Activated CD8-positive, alpha-beta T cell treated with anti-CD3 and anti-CD28 coated beads for 36 hours (primary cell): ENCODE measurements at regions of chr19 and their contacts with region 1.

Region 1: GRCh38 chr19:39445265-39446111 is at the start of gene SUPT5H:
- DNase-seq: peak; percentile 99
- ATAC-seq: peak; percentile 93
- H3K4me3 Mint-ChIP-seq: peak within 1 kb of the TSS; percentile 100
- H3K27ac Mint-ChIP-seq: peak within 1 kb of the TSS; percentile 99
- H3K4me1 Mint-ChIP-seq: peaks cover 40% of the 10 kb centered on the region
- H3K27me3 Mint-ChIP-seq: no peaks in the 10 kb centered on the region
- CTCF ChIP-seq: no peak
- total RNA-seq, gene SUPT5H: 127 to 141 TPM

Region 2: DNA sequence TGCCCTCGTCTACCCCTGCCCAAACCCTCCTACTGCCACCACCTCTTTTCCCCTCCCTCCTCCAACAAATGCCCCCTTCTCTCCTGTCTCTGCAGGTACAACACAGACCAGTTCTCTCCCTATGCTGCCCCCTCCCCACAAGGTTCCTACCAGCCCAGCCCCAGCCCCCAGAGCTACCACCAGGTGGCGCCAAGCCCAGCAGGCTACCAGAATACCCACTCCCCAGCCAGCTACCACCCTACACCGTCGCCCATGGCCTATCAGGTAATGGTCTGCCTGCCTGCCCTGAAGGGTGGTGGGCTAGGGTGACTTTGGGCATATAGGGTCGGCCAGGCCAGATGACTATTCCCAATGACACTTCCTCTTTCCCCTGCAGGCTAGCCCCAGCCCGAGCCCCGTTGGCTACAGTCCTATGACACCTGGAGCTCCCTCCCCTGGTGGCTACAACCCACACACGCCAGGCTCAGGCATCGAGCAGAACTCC is 28.7 kb after region 1 on chr19:
- CTCF ChIA-PET with region 1: interaction called, 12 read pairs
- POLR2A ChIA-PET with region 1: interaction called, 5 read pairs
- intact Hi-C with region 1: no loop called
- DNase-seq: peak; percentile 80
- ATAC-seq: peak; percentile 70
- H3K4me3 Mint-ChIP-seq: no peak overlapping the region
- H3K27ac Mint-ChIP-seq: no peak overlapping the region
- H3K4me1 Mint-ChIP-seq: peaks cover 32% of the 10 kb centered on the region
- H3K27me3 Mint-ChIP-seq: no peaks in the 10 kb centered on the region
- CTCF ChIP-seq: peak; percentile 76

Region 3: DNA sequence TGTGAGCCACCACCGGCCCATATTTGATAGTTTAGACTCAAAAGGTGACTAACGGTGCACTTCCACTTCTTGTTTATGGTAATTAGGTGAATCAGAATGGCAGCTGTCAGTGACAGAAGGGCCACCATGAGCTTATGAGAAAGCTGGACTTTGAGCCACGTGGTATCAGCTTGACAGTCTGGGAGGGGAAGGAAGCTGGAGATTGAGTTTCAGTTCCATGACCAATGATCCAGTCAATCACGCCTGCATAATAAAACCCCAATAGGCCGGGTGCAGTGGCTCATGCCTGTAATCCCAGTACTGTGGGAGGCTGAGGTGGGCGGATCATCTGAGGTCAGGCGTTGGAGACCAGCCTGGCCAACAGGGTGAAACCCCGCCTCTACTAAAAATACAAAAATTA is 79.0 kb after region 1 on chr19:
- CTCF ChIA-PET with region 1: interaction called, 3 read pairs
- POLR2A ChIA-PET with region 1: no interaction called
- intact Hi-C with region 1: loop called (anchors 5 kb)
- DNase-seq: no peak
- ATAC-seq: no peak
- H3K4me3 Mint-ChIP-seq: no peak overlapping the region
- H3K27ac Mint-ChIP-seq: no peak overlapping the region
- H3K4me1 Mint-ChIP-seq: peaks cover 10% of the 10 kb centered on the region
- H3K27me3 Mint-ChIP-seq: no peaks in the 10 kb centered on the region
- CTCF ChIP-seq: no peak

Region 4: GRCh38 chr19:40006273-40006691 is 560.8 kb after region 1 on chr19:
- CTCF ChIA-PET with region 1: no interaction called
- POLR2A ChIA-PET with region 1: no interaction called
- intact Hi-C with region 1: no loop called
- DNase-seq: no peak
- ATAC-seq: no peak
- H3K4me3 Mint-ChIP-seq: no peak overlapping the region
- H3K27ac Mint-ChIP-seq: no peak overlapping the region
- H3K4me1 Mint-ChIP-seq: peaks cover 5% of the 10 kb centered on the region
- H3K27me3 Mint-ChIP-seq: no peaks in the 10 kb centered on the region
- CTCF ChIP-seq: no peak